B cell (primary cell): ENCODE measurements at regions of chr6 and their contacts with region 1.

Region 1: GRCh38 chr6:33248925-33249731 is 22.5 kb downstream of the VPS52 start:
- DNase-seq: peak; percentile 99
- ATAC-seq: peak; percentile 85
- H3K4me3 ChIP-seq: peak overlapping the region; percentile 63 to 84 (median 75)
- H3K4me3 Mint-ChIP-seq: peak overlapping the region; percentile 97
- H3K27ac ChIP-seq: peak overlapping the region; percentile 75 to 88
- H3K27ac Mint-ChIP-seq: peak overlapping the region; percentile 97
- H3K4me1 ChIP-seq: peaks cover 12 to 24% of the 10 kb centered on the region in 2 donors
- H3K4me1 Mint-ChIP-seq: peaks cover 31% of the 10 kb centered on the region
- H3K27me3 ChIP-seq: peaks cover 0 to 4% (median 0%) of the 10 kb centered on the region in 4 experiments
- H3K27me3 Mint-ChIP-seq: peaks cover 4% of the 10 kb centered on the region
- CTCF ChIP-seq: no peak

Region 2: DNA sequence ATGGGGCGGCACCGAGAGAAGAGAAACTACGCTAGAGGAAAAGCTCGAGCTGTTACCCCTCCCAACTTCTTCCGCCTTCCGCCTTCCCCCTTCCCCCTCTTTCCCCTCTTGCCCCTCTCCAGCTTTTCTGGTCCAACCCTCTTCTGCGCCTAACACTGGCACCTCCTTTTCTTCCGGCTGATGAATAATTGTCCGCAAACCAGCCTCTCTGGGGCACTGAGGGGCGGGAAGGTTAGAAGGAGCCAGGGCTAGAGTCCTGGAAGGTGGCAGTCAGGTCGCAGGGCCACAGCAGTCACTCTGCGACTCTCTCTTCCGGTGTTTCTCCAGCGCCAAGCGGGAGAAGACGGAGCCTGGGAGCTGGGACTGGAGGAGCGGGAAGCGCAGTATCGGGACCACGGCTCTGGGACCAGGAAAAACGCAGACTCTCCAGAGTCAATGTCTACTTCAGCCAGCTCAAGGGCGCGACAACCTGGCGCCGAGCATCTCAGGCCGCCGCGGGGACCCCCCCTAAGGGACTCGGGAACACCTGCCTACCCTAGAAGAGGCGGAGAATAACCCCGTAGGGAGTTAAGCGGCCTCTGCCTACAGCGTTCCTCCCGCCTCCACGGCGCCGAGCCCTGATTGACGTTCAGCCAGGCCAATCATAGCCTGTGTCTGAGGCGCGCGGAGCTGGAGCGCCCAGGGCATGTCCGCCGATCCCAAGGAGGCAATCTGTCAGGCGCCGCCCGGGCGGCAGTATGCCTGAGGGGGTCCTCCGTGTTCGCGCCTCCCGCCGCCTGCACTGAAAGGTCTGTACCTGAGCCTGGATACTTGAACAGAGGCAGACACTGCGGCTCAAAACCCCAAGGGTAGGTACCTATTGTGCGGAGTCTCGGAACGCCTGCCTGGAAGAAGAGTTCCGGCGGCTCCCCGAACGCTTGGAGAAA is 354.8 kb before region 1 on chr6:
- CTCF ChIA-PET with region 1: no interaction called
- POLR2A ChIA-PET with region 1: interaction called, 3 read pairs
- intact Hi-C with region 1: loop called (anchors 10 kb)
- DNase-seq: peak; percentile 98
- ATAC-seq: peak; percentile 98
- H3K4me3 ChIP-seq: peak overlapping the region; percentile 84 to 96 (median 92)
- H3K4me3 Mint-ChIP-seq: peak overlapping the region; percentile 99
- H3K27ac ChIP-seq: peak overlapping the region; percentile 89 to 90
- H3K27ac Mint-ChIP-seq: peak overlapping the region; percentile 98
- H3K4me1 ChIP-seq: peaks cover 40 to 42% of the 10 kb centered on the region in 2 donors
- H3K4me1 Mint-ChIP-seq: peaks cover 60% of the 10 kb centered on the region
- H3K27me3 ChIP-seq: no peaks in the 10 kb centered on the region
- H3K27me3 Mint-ChIP-seq: no peaks in the 10 kb centered on the region
- CTCF ChIP-seq: no peak

Region 3: DNA sequence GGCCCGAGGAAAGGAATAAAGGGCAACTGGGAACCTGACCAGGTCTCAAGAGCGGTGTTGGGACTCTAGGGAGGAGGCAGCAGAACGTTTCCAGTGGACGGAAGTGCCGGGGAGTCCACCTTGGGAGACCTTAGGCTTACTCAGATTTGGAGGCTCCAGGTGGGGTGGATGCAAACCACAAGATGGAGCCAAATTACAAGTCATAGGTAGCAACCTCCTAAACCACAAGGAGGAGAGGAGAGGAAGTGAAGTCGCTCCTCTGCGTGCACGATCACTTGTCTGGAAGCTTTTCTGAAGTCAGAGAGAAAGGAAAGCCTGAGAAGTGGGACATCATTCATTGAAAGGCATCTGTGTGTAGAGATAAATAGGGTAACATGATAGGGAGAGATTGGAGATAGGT is 249.1 kb before region 1 on chr6:
- CTCF ChIA-PET with region 1: interaction called, 15 read pairs
- POLR2A ChIA-PET with region 1: no interaction called
- intact Hi-C with region 1: loop called (anchors 1 kb)
- DNase-seq: peak; percentile 79
- ATAC-seq: peak; percentile 94
- H3K4me3 ChIP-seq: no peak overlapping the region
- H3K4me3 Mint-ChIP-seq: peak overlapping the region; percentile 11
- H3K27ac ChIP-seq: peak overlapping the region in 1 of 2 donors; percentile 31
- H3K27ac Mint-ChIP-seq: peak overlapping the region; percentile 53
- H3K4me1 ChIP-seq: peaks cover 10 to 13% of the 10 kb centered on the region in 2 donors
- H3K4me1 Mint-ChIP-seq: peaks cover 21% of the 10 kb centered on the region
- H3K27me3 ChIP-seq: no peaks in the 10 kb centered on the region
- H3K27me3 Mint-ChIP-seq: no peaks in the 10 kb centered on the region
- CTCF ChIP-seq: peak; percentile 70

Region 4: GRCh38 chr6:33126101-33126714 is 122.9 kb before region 1 on chr6:
- CTCF ChIA-PET with region 1: interaction called, 13 read pairs
- POLR2A ChIA-PET with region 1: no interaction called
- intact Hi-C with region 1: no loop called
- DNase-seq: peak; percentile 77
- ATAC-seq: peak; percentile 63
- H3K4me3 ChIP-seq: no peak overlapping the region
- H3K4me3 Mint-ChIP-seq: no peak overlapping the region
- H3K27ac ChIP-seq: no peak overlapping the region
- H3K27ac Mint-ChIP-seq: peak overlapping the region; percentile 59
- H3K4me1 ChIP-seq: peaks cover 0 to 10% of the 10 kb centered on the region in 2 donors
- H3K4me1 Mint-ChIP-seq: peaks cover 5% of the 10 kb centered on the region
- H3K27me3 ChIP-seq: no peaks in the 10 kb centered on the region
- H3K27me3 Mint-ChIP-seq: no peaks in the 10 kb centered on the region
- CTCF ChIP-seq: peak; percentile 87

Region 5: GRCh38 chr6:33208091-33208967 is 40.8 kb before region 1 on chr6 and contains the start of gene RING1:
- CTCF ChIA-PET with region 1: interaction called, 8 read pairs
- POLR2A ChIA-PET with region 1: interaction called, 12 read pairs
- intact Hi-C with region 1: loop called (anchors 1 kb)
- DNase-seq: peak; percentile 92
- ATAC-seq: peak; percentile 54
- H3K4me3 ChIP-seq: peak within 1 kb of the TSS; percentile 71 to 99 (median 90)
- H3K4me3 Mint-ChIP-seq: peak within 1 kb of the TSS; percentile 88
- H3K27ac ChIP-seq: peak within 1 kb of the TSS; percentile 87 to 91
- H3K27ac Mint-ChIP-seq: peak within 1 kb of the TSS; percentile 90
- H3K4me1 ChIP-seq: peaks cover 31 to 45% of the 10 kb centered on the region in 2 donors
- H3K4me1 Mint-ChIP-seq: peaks cover 40% of the 10 kb centered on the region
- H3K27me3 ChIP-seq: peaks cover 0 to 10% (median 8%) of the 10 kb centered on the region in 4 experiments
- H3K27me3 Mint-ChIP-seq: peaks cover 9% of the 10 kb centered on the region
- CTCF ChIP-seq: no peak
- total RNA-seq, gene RING1: 43.4 and 44.2 TPM in 2 replicates

Region 6: GRCh38 chr6:33299237-33299944 is 50.3 kb after region 1 on chr6:
- CTCF ChIA-PET with region 1: interaction called, 4 read pairs
- POLR2A ChIA-PET with region 1: interaction called, 4 read pairs
- intact Hi-C with region 1: loop called (anchors 2 kb)
- DNase-seq: peak; percentile 95
- ATAC-seq: peak; percentile 68
- H3K4me3 ChIP-seq: peak overlapping the region; percentile 71 to 96 (median 79)
- H3K4me3 Mint-ChIP-seq: peak overlapping the region; percentile 99
- H3K27ac ChIP-seq: peak overlapping the region; percentile 86 to 91
- H3K27ac Mint-ChIP-seq: peak overlapping the region; percentile 99
- H3K4me1 ChIP-seq: peaks cover 12 to 24% of the 10 kb centered on the region in 2 donors
- H3K4me1 Mint-ChIP-seq: peaks cover 38% of the 10 kb centered on the region
- H3K27me3 ChIP-seq: no peaks in the 10 kb centered on the region
- H3K27me3 Mint-ChIP-seq: no peaks in the 10 kb centered on the region
- CTCF ChIP-seq: peak; percentile 69